ENCODE measurements at regions of chr13 and their contacts with region 1.

Region 1: GRCh38 chr13:113995051-113995601 is 21.2 kb upstream of the C13orf46 start:
- DNase-seq: no peak
- H3K4me3 ChIP-seq: no peak overlapping the region
- H3K27ac ChIP-seq: no peak overlapping the region
- H3K27me3 ChIP-seq: no peaks in the 10 kb centered on the region
- CTCF ChIP-seq: no peak

Region 2: DNA sequence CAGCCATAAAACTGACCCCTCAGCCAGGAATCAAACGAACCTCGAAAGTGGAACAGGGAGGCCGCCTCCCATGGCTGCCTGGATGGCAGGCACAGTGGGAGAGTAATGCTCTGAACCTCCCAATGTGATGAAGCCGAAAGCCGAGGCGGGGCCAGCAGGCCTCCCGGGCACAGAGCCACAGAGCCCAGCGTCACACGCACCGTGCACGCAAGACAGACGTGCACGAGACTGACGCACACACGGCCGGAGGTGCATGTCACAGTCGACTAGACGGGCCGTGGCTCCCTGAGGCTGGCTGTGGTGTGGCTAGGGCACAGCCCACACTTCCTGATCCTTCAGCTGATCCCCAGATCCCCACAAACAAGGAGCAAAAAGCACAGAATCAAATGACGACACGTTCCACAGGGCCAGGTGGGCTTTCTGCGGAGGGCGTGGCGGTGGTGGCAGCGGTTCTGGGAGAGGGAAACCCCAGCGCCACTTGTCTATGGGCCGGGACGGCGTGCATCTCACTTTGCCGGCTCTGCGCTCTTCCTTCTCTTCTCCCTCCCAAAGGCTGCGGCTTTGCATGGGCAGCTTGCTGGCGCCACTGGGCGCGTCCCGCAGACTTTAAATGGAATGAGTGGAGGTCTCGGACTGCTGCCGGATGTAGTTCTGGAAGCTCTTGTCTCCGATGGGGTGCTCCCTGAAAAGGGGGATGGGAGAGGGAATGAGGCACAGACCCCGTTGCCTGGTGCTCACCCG is 16.2 kb before region 1 on chr13:
- intact Hi-C with region 1: loop called in 1 of 2 experiments (anchors 2 kb)
- DNase-seq: peak in 2 of 10 donors; percentile 34 to 42
- H3K4me3 ChIP-seq: no peak overlapping the region
- H3K27ac ChIP-seq: no peak overlapping the region
- H3K27me3 ChIP-seq: no peaks in the 10 kb centered on the region
- CTCF ChIP-seq: no peak